HAP-1 (cell line): ENCODE measurements at regions of chr5 and their contacts with region 1.

Region 1: GRCh38 chr5:64229163-64229774 is 63.6 kb downstream of the RNF180 start:
- DNase-seq: peak in 1 of 2 experiments; percentile 28
- H3K4me3 ChIP-seq: no peak overlapping the region
- H3K4me1 ChIP-seq: no peaks in the 10 kb centered on the region
- H3K27me3 ChIP-seq: no peaks in the 10 kb centered on the region

Region 2: GRCh38 chr5:63674881-63675280 is 554.4 kb before region 1 on chr5:
- in situ Hi-C with region 1: no loop called
- DNase-seq: no peak
- H3K4me3 ChIP-seq: no peak overlapping the region
- H3K4me1 ChIP-seq: no peaks in the 10 kb centered on the region
- H3K27me3 ChIP-seq: no peaks in the 10 kb centered on the region

Region 3: DNA sequence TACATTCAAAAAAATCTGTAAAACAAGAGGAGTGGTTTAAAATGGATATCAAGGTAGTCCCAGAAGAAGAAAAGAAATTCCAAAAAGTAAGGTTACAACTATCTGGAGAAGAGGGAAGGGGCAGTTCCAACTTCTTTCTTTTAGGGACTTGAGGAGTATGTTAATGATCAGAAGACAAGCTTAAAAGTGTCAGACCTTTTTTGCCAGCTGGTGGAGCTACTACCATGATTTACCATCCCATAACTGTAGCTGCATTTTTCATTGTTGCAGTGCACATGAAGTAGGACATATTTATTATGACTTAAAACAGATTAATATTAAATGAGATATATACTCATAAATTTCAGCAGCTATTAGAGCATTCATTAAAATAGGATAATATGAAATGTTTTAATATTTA is 118.0 kb after region 1 on chr5:
- in situ Hi-C with region 1: no loop called
- DNase-seq: no peak
- H3K4me3 ChIP-seq: no peak overlapping the region
- H3K4me1 ChIP-seq: no peaks in the 10 kb centered on the region
- H3K27me3 ChIP-seq: no peaks in the 10 kb centered on the region

Region 4: DNA sequence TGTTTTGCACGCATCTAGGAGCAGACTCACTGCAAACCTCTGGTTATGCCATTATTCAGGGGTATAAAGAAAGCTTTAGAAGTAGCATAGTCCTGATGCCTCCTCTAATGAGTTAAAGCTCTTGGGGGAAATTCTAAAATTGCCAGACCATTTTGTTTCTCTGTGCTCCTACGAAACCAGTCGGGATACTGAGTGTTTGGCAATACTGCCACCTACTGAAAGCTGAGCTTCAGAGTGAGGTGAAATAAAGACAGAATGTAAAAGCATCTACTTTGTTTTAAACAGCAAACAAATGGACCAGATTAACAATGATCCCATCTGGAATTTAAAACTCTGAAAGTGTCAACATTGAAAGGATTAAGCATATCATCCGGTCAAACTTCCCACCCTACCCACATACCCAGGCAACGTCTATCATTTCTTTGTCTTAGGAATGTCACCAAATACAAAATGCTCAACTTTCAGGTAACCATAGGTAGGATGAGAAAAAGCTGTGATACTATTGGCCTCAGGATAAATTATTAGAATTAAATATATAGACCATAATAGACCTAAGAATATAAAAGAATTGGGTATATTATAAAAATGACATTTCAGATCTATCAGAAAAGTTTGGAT is 383.2 kb after region 1 on chr5:
- in situ Hi-C with region 1: loop called (anchors 10 kb)
- DNase-seq: peak; percentile 30 to 47
- H3K4me3 ChIP-seq: no peak overlapping the region
- H3K4me1 ChIP-seq: peaks cover 2% of the 10 kb centered on the region
- H3K27me3 ChIP-seq: peaks cover 19% of the 10 kb centered on the region

Region 5: GRCh38 chr5:64625678-64626077 is 396.4 kb after region 1 on chr5:
- in situ Hi-C with region 1: no loop called
- DNase-seq: no peak
- H3K4me3 ChIP-seq: no peak overlapping the region
- H3K4me1 ChIP-seq: no peaks in the 10 kb centered on the region
- H3K27me3 ChIP-seq: peaks cover 6% of the 10 kb centered on the region